ENCODE measurements at regions of chr6 and their contacts with region 1.

Region 1: DNA sequence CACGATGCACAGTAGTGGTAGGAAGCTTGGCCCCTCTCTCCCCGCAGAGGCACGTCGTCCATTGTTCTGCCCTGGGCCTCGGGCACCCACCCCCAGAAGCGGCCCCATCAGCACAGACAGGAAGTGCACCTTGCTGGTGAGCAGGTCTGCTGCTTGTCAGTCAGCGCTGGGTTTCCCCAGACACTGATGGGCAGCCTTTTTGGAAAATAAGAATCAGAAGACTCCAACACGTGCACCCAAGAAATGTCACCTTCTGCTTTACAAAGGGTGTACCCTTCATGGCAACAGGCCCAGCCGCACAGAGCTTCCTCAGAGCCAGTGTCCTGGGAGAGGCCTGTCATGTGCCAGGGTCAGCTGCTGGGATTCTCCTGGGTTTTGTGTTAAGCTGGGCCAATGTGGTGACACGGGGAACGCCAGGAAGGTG is 34.7 kb upstream of the IRF4 start:
- DNase-seq: no peak
- H3K27ac ChIP-seq: no peak overlapping the region
- CTCF ChIP-seq: no peak

Region 2: GRCh38 chr6:524803-525202 is 168.0 kb after region 1 on chr6:
- CTCF ChIA-PET with region 1: interaction called, 10 read pairs
- POLR2A ChIA-PET with region 1: no interaction called
- DNase-seq: no peak
- H3K27ac ChIP-seq: no peak overlapping the region
- CTCF ChIP-seq: no peak